ENCODE measurements at regions of chr14 and their contacts with region 1.

Region 1: DNA sequence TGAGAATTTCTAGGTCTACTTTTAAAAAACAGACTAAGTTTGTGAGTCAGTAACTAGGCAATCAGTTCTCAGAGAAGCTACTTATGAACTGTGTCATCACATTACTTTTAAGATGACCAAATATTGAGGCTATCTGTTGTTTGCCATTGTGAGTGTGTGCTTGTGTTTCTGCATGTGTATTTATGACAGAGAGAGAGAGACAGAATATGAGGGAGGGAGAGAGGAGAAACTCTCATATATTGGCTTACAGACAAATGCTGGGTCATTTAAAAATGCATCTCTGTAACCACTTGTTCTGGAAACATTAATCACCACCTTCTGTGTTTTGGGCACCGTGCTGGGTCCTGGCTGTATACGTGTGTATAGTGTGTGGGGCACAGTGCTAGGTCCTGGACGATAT is 161.5 kb upstream of the FRMD6 start:
- DNase-seq: peak; percentile 67
- H3K4me3 ChIP-seq: peak overlapping the region; percentile 55 to 97 (median 85)
- H3K27ac ChIP-seq: peak overlapping the region; percentile 99
- H3K4me1 ChIP-seq: peaks cover 31% of the 10 kb centered on the region
- H3K27me3 ChIP-seq: no peaks in the 10 kb centered on the region
- CTCF ChIP-seq: no peak

Region 2: GRCh38 chr14:51293149-51293911 is 196.9 kb before region 1 on chr14:
- CTCF ChIA-PET with region 1: no interaction called
- dilution Hi-C with region 1: no loop called
- in situ Hi-C with region 1: loop called in 1 of 2 experiments (anchors 5 kb)
- intact Hi-C with region 1: no loop called
- DNase-seq: peak; percentile 37
- H3K4me3 ChIP-seq: no peak overlapping the region
- H3K27ac ChIP-seq: no peak overlapping the region
- H3K4me1 ChIP-seq: peaks cover 14% of the 10 kb centered on the region
- H3K27me3 ChIP-seq: no peaks in the 10 kb centered on the region
- CTCF ChIP-seq: no peak

Region 3: GRCh38 chr14:51430633-51431032 is 59.6 kb before region 1 on chr14:
- CTCF ChIA-PET with region 1: interaction called, 14 read pairs
- dilution Hi-C with region 1: no loop called
- in situ Hi-C with region 1: no loop called
- intact Hi-C with region 1: loop called (anchors 2 kb)
- DNase-seq: no peak
- H3K4me3 ChIP-seq: no peak overlapping the region
- H3K27ac ChIP-seq: no peak overlapping the region
- H3K4me1 ChIP-seq: peaks cover 23% of the 10 kb centered on the region
- H3K27me3 ChIP-seq: no peaks in the 10 kb centered on the region
- CTCF ChIP-seq: no peak

Region 4: GRCh38 chr14:51547260-51547659 is 57.1 kb after region 1 on chr14:
- CTCF ChIA-PET with region 1: no interaction called
- dilution Hi-C with region 1: no loop called
- in situ Hi-C with region 1: no loop called
- intact Hi-C with region 1: loop called (anchors 2 kb)
- DNase-seq: peak; percentile 99
- H3K4me3 ChIP-seq: peak overlapping the region in 1 of 3 experiments; percentile 8
- H3K27ac ChIP-seq: peak overlapping the region; percentile 96
- H3K4me1 ChIP-seq: peaks cover 60% of the 10 kb centered on the region
- H3K27me3 ChIP-seq: no peaks in the 10 kb centered on the region
- CTCF ChIP-seq: no peak

Region 5: DNA sequence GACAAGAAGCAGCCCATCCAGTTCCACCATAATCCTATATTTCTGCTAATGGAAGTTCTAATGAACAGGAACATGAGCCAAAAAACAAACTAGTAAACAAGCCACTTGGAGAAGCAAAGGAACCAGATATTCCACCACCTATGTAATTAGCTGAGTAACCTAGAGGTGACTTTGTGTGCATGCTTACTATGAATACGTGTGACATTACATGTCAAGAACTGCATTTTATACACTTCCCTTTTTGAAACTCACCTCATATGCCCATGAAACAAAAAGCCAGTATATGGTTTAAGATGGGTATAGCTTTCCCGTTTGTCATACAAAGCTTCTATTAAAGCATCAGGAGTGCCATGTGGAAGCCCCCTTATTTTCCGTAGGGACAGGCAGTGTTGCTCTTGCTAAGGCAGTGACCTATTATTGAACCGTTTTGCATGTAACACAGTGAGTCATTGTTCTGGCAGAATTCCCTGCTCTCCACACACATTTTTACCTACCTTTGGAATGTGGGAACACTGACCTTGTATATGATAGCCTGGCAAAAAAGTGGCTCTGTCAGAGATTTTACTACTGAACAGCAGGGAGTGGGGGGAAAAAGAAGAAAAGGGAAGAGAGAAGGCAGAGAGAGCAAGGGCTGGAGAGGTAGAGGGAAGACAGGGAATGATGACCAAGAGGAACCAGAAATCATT is 126.7 kb after region 1 on chr14:
- CTCF ChIA-PET with region 1: no interaction called
- dilution Hi-C with region 1: no loop called
- in situ Hi-C with region 1: no loop called
- intact Hi-C with region 1: no loop called
- DNase-seq: peak; percentile 80
- H3K4me3 ChIP-seq: no peak overlapping the region
- H3K27ac ChIP-seq: peak overlapping the region; percentile 1
- H3K4me1 ChIP-seq: peaks cover 21% of the 10 kb centered on the region
- H3K27me3 ChIP-seq: no peaks in the 10 kb centered on the region
- CTCF ChIP-seq: no peak